Heart right ventricle (tissue), 16 donors: ENCODE measurements at regions of chr6 and their contacts with region 1.

Region 1: DNA sequence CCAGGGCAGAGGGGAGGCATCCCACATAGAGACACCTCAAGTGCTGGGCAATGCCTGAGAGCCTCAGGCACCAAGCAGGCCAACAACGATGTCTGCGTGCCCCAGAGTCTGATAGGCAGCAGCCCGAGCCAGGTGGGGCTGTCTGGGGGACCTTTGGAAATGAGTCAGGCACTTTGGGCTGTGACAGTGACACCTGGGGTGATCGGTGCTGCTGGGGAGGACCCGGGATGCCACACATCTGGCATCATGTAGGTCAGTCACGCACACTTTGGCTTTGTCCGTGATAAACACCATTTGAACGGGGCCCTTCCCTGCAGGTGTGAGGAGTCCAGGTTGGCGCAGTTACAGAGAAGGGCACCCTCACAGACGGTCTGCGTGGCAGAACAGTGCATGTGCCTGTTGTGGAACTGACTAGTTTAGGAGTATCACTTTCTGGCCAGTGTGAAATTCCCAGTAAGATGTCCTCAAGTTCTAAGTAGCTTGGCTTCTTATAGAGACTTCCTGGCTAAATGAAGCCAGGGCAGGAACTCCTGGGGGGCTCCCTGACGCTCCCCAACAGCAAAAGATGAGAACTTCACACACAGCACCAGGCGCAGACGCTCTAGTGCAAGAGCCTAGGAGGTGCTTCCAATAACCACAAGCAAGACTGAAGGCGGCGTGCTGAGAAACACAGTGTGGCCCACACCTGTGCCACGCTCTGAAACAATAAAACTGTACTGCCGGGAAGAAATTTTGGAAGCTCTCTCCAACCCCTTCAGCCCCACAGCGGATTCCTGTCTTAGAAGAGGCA is 134.7 kb downstream of the WDR27 start:
- DNase-seq: no peak
- ATAC-seq: no peak
- H3K4me3 ChIP-seq: no peak overlapping the region
- H3K27ac ChIP-seq: no peak overlapping the region
- H3K4me1 ChIP-seq: no peaks in the 10 kb centered on the region
- H3K27me3 ChIP-seq: no peaks in the 10 kb centered on the region
- CTCF ChIP-seq: no peak

Region 2: DNA sequence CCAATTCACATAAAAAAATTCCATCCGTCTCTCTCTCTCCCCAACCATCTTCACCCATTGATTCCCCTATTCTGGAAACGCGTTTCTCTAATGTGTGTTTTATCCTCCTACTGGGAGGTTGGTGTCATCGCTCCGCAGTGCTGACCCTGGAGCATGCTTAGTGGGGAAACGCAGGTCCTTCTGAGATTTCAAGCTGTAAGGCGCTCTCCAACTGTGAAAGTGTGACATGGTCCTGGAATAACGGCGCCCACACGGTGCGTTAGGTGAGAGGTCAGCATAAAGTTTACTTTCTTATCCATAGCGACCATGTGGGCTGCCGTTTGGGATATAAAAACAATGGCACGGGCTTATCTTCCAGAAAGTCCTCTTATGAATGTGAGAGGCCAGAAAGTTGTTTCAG is 10.8 kb after region 1 on chr6:
- intact Hi-C with region 1: loop called in 1 of 10 experiments (anchors 1 kb)
- DNase-seq: no peak
- ATAC-seq: no peak
- H3K4me3 ChIP-seq: peak overlapping the region in 2 of 10 donors; percentile 28 to 38
- H3K27ac ChIP-seq: no peak overlapping the region
- H3K4me1 ChIP-seq: no peaks in the 10 kb centered on the region
- H3K27me3 ChIP-seq: no peaks in the 10 kb centered on the region
- CTCF ChIP-seq: no peak

Region 3: GRCh38 chr6:169701954-169702839 is 135.0 kb after region 1 on chr6 and contains the starts of genes C6orf120 and WDR27:
- intact Hi-C with region 1: no loop called
- DNase-seq: peak; percentile 96 to 97
- ATAC-seq: peak; percentile 98 to 99 (median 98)
- H3K4me3 ChIP-seq: peak within 1 kb of the TSS; percentile 78 to 97 (median 88)
- H3K27ac ChIP-seq: peak within 1 kb of the TSS; percentile 83 to 98 (median 94)
- H3K4me1 ChIP-seq: peaks cover 3 to 63% (median 44%) of the 10 kb centered on the region in 9 donors
- H3K27me3 ChIP-seq: no peaks in the 10 kb centered on the region
- CTCF ChIP-seq: peak in 3 of 9 donors; percentile 15 to 29 (median 28)
- total RNA-seq, gene C6orf120: 12.4 to 18.9 (median 14.1) TPM
- total RNA-seq, gene WDR27: 5.1 to 11.0 (median 6.6) TPM